OCI-LY7 (cell line): ENCODE measurements at regions of chr3 and their contacts with region 1.

Region 1: GRCh38 chr3:99313485-99313884 is 324.9 kb upstream of the COL8A1 start:
- DNase-seq: no peak
- H3K4me3 ChIP-seq: no peak overlapping the region
- H3K27ac ChIP-seq: no peak overlapping the region
- H3K4me1 ChIP-seq: no peaks in the 10 kb centered on the region
- CTCF ChIP-seq: no peak

Region 2: DNA sequence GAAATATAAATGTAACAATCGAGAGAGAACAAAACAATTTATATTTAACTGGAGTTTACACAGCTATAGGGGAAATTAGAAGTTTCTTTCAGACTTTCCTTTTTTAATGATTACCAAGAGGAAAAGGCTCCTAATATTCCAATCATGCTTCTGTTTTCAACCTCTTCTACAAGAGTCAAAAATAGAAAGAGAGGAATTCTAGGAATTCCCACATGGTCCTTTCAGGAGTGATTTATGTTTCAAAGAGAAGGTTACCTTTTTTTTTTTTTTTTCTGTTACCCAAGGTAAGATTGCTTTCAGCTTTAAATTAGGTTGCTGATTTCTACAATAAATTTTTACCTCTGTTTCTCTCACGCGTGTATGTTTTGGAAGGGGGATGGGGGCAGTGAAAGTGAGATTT is 56.7 kb before region 1 on chr3:
- CTCF ChIA-PET with region 1: no interaction called
- POLR2A ChIA-PET with region 1: no interaction called
- intact Hi-C with region 1: loop called (anchors 5 kb)
- DNase-seq: no peak
- H3K4me3 ChIP-seq: no peak overlapping the region
- H3K27ac ChIP-seq: no peak overlapping the region
- H3K4me1 ChIP-seq: no peaks in the 10 kb centered on the region
- CTCF ChIP-seq: no peak